ENCODE measurements at regions of chr7 and their contacts with region 1.

Region 1: GRCh38 chr7:123154231-123154860 is 45.4 kb downstream of the SLC13A1 start:
- DNase-seq: peak; percentile 49
- H3K4me3 ChIP-seq: no peak overlapping the region; a peak in 1 of 4 replicates
- H3K27ac ChIP-seq: no peak overlapping the region
- H3K4me1 ChIP-seq: no peaks in the 10 kb centered on the region; a peak in 1 of 4 replicates
- H3K27me3 ChIP-seq: no peaks in the 10 kb centered on the region
- CTCF ChIP-seq: peak; percentile 97
- EP300 ChIP-seq: no peak
- RAD21 ChIP-seq: peak; percentile 89

Region 2: DNA sequence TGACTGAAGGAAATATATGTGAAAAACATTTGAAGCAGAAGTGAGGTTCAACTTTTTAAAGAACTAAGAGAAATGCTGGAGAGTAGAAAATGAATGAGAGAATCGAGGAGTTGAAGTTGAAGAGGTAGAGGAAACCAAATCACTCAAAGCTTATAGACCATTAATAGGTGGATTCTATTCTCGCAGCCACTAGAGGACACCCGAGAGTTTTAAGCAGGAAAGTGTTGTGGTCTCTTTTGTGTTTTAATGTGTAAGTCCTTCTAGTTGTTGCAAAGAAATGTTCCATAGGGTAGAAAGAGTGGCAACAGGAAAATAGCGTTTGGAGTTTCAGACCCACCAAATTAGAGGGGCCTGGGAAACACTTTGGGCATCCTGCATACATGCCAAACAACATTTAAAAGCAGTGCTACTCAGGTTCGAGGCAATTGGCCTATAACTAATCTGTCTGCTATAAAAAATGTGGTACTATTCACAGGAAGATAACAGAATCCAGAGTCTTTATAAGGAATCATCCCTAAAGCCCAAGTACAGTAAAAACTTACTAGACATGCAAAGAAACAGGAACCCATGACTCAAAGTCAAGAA is 83.6 kb before region 1 on chr7:
- CTCF ChIA-PET with region 1: interaction called, 26 read pairs
- POLR2A ChIA-PET with region 1: no interaction called
- DNase-seq: peak; percentile 39
- H3K4me3 ChIP-seq: no peak overlapping the region
- H3K27ac ChIP-seq: no peak overlapping the region
- H3K4me1 ChIP-seq: no peaks in the 10 kb centered on the region
- H3K27me3 ChIP-seq: no peaks in the 10 kb centered on the region
- CTCF ChIP-seq: peak; percentile 83
- EP300 ChIP-seq: no peak
- RAD21 ChIP-seq: peak; percentile 83

Region 3: GRCh38 chr7:123143252-123144006 is 10.9 kb before region 1 on chr7:
- CTCF ChIA-PET with region 1: interaction called, 61 read pairs
- POLR2A ChIA-PET with region 1: interaction called, 3 read pairs
- DNase-seq: no peak
- H3K4me3 ChIP-seq: no peak overlapping the region
- H3K27ac ChIP-seq: no peak overlapping the region
- H3K4me1 ChIP-seq: no peaks in the 10 kb centered on the region
- H3K27me3 ChIP-seq: no peaks in the 10 kb centered on the region
- CTCF ChIP-seq: no peak
- EP300 ChIP-seq: no peak
- RAD21 ChIP-seq: no peak

Region 4: GRCh38 chr7:123184271-123184670 is 29.9 kb after region 1 on chr7:
- CTCF ChIA-PET with region 1: interaction called, 28 read pairs
- POLR2A ChIA-PET with region 1: no interaction called
- DNase-seq: no peak
- H3K4me3 ChIP-seq: no peak overlapping the region
- H3K27ac ChIP-seq: no peak overlapping the region
- H3K4me1 ChIP-seq: no peaks in the 10 kb centered on the region
- H3K27me3 ChIP-seq: no peaks in the 10 kb centered on the region
- CTCF ChIP-seq: no peak
- EP300 ChIP-seq: no peak
- RAD21 ChIP-seq: no peak

Region 5: DNA sequence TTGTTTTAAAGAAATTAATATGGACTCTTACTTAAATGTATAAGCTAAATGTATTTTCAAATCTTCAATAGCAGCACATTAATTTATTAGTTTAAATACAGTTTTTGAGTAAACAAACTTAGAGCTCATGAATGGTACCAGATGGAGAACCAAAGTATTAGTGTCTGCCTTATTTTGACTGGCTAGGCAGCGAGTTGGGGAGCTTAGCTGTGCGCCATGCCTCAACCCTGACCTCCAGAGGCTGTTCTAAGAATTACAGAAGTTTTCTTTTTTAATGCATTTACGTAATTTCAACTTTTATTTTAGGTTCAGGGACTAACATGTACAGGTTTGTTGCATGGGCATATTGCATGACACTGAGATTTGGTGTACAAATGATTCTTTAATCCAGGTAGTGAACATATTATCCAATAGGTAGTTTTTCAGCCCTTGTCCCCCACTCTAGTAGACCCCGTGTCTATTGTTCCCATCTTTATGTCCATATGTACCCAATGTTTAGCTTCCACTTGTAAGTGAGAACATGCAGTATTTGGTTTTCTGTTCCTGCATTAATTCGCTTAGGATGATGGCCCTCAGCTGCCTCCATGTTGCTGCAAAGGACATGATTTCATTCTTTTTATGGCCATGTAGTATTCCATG is 213.3 kb after region 1 on chr7:
- CTCF ChIA-PET with region 1: interaction called, 36 read pairs
- POLR2A ChIA-PET with region 1: no interaction called
- DNase-seq: peak; percentile 66
- H3K4me3 ChIP-seq: no peak overlapping the region
- H3K27ac ChIP-seq: no peak overlapping the region
- H3K4me1 ChIP-seq: no peaks in the 10 kb centered on the region
- H3K27me3 ChIP-seq: no peaks in the 10 kb centered on the region
- CTCF ChIP-seq: peak; percentile 91
- EP300 ChIP-seq: no peak
- RAD21 ChIP-seq: peak; percentile 99

Measured in SK-N-SH (cell line).